CD8-positive, alpha-beta memory T cell (primary cell): ENCODE measurements at regions of chr17 and their contacts with region 1.

Region 1: GRCh38 chr17:59619293-59620063 is at the start of gene CLTC:
- DNase-seq: peak; percentile 87 to 95 (median 94)
- H3K4me3 ChIP-seq: peak within 1 kb of the TSS; percentile 88
- H3K4me3 Mint-ChIP-seq: peak within 1 kb of the TSS; percentile 95 to 99 (median 96)
- H3K27ac ChIP-seq: peak within 1 kb of the TSS; percentile 98
- H3K27ac Mint-ChIP-seq: peak within 1 kb of the TSS; percentile 97 to 100 (median 99)
- H3K4me1 ChIP-seq: peaks cover 47% of the 10 kb centered on the region
- H3K4me1 Mint-ChIP-seq: peaks cover 45 to 58% (median 58%) of the 10 kb centered on the region in 3 donors
- H3K27me3 ChIP-seq: no peaks in the 10 kb centered on the region
- H3K27me3 Mint-ChIP-seq: peaks cover 0 to 5% of the 10 kb centered on the region in 2 donors
- total RNA-seq, gene CLTC: 177 to 183 TPM

Region 2: GRCh38 chr17:59565171-59565969 is 54.1 kb before region 1 on chr17 and contains the start of gene DHX40:
- CTCF ChIA-PET with region 1: no interaction called
- POLR2A ChIA-PET with region 1: interaction called, 13 read pairs
- DNase-seq: peak; percentile 89 to 95 (median 93)
- H3K4me3 ChIP-seq: peak within 1 kb of the TSS; percentile 96
- H3K4me3 Mint-ChIP-seq: peak within 1 kb of the TSS; percentile 99 to 100 (median 100)
- H3K27ac ChIP-seq: peak within 1 kb of the TSS; percentile 96
- H3K27ac Mint-ChIP-seq: peak within 1 kb of the TSS; percentile 96 to 100 (median 100)
- H3K4me1 ChIP-seq: peaks cover 20% of the 10 kb centered on the region
- H3K4me1 Mint-ChIP-seq: peaks cover 24 to 31% (median 26%) of the 10 kb centered on the region in 3 donors
- H3K27me3 ChIP-seq: no peaks in the 10 kb centered on the region
- H3K27me3 Mint-ChIP-seq: no peaks in the 10 kb centered on the region
- total RNA-seq, gene DHX40: 17.9 to 22.3 TPM